ENCODE measurements at regions of chr1 and their contacts with region 1.

Region 1: GRCh38 chr1:221741711-221742554 is at the start of gene DUSP10:
- DNase-seq: peak; percentile 100
- ATAC-seq: peak; percentile 91
- H3K4me3 Mint-ChIP-seq: no peak within 1 kb of the TSS
- H3K27ac Mint-ChIP-seq: no peak within 1 kb of the TSS
- H3K4me1 Mint-ChIP-seq: peaks cover 27% of the 10 kb centered on the region
- H3K27me3 Mint-ChIP-seq: no peaks in the 10 kb centered on the region
- CTCF ChIP-seq: no peak
- total RNA-seq, gene DUSP10: 10.8 to 12.9 TPM

Region 2: DNA sequence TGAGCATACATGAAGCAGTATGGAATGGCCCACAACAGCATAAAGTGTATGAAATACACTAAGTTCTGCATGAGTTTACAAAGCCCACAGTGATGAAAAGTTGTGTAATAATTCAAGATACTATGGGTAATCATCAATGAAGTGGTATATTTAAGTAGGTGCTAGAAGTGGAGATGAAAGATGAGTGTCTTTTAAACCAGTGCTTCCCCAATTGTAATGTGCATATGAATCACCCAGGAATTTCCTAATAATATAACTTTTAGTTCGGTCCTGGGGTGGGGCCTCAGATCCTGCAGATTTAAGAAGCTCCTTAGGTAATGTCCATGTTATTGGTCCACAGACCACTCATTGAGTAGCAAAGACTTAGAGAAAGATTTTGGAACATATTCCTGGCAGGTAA is 184.9 kb before region 1 on chr1:
- CTCF ChIA-PET with region 1: no interaction called
- POLR2A ChIA-PET with region 1: no interaction called
- intact Hi-C with region 1: loop called (anchors 10 kb)
- DNase-seq: no peak
- ATAC-seq: no peak
- H3K4me3 Mint-ChIP-seq: no peak overlapping the region
- H3K27ac Mint-ChIP-seq: no peak overlapping the region
- H3K4me1 Mint-ChIP-seq: no peaks in the 10 kb centered on the region
- H3K27me3 Mint-ChIP-seq: peaks cover 2% of the 10 kb centered on the region
- CTCF ChIP-seq: no peak

Region 3: DNA sequence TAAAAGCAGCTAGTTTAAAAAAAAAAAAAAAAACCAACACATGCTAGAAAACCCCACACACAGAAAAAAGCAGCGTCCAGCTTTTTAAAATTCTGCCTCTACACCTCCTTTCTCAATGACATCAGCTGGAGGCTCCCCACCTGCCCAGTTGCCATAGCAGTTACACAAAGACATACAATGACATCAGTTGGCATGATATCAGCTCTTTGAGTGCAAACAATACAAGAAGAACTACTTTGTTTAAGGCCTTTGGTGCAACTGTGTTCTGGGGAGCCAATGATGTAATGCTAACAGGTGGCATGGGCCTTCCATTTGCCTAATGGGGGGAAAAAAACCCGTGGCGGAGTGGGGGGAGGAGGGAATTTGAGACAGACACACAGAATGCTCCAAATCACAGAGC is 32.9 kb before region 1 on chr1:
- CTCF ChIA-PET with region 1: interaction called, 5 read pairs
- POLR2A ChIA-PET with region 1: interaction called, 52 read pairs
- intact Hi-C with region 1: loop called (anchors 1 kb)
- DNase-seq: peak; percentile 61
- ATAC-seq: no peak
- H3K4me3 Mint-ChIP-seq: no peak overlapping the region
- H3K27ac Mint-ChIP-seq: peak overlapping the region; percentile 90
- H3K4me1 Mint-ChIP-seq: peaks cover 63% of the 10 kb centered on the region
- H3K27me3 Mint-ChIP-seq: no peaks in the 10 kb centered on the region
- CTCF ChIP-seq: no peak

Region 4: DNA sequence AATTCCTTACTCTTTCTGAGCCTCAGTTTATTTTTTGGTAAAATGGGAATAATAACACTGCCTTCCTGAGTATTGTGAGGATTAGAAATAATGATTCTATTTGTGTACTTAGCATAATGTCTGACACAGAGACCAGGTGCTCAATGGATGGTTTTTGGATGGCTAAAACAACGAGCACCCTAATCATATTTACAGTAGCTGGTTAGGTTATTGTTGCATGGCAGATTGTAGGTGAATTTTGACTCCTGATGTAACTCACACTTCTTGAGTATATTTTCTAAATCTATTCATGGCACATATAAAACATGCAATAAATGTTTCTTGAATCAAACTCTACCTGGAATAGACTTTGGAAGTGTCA is 11.9 kb after region 1 on chr1:
- CTCF ChIA-PET with region 1: interaction called, 4 read pairs
- POLR2A ChIA-PET with region 1: interaction called, 11 read pairs
- intact Hi-C with region 1: no loop called
- DNase-seq: no peak
- ATAC-seq: peak; percentile 43
- H3K4me3 Mint-ChIP-seq: no peak overlapping the region
- H3K27ac Mint-ChIP-seq: peak overlapping the region; percentile 88
- H3K4me1 Mint-ChIP-seq: peaks cover 52% of the 10 kb centered on the region
- H3K27me3 Mint-ChIP-seq: peaks cover 3% of the 10 kb centered on the region
- CTCF ChIP-seq: no peak

Region 5: GRCh38 chr1:221839796-221840395 is 98.0 kb after region 1 on chr1:
- CTCF ChIA-PET with region 1: interaction called, 7 read pairs
- POLR2A ChIA-PET with region 1: interaction called, 4 read pairs
- intact Hi-C with region 1: loop called (anchors 5 kb)
- DNase-seq: peak; percentile 90
- ATAC-seq: peak; percentile 96
- H3K4me3 Mint-ChIP-seq: no peak overlapping the region
- H3K27ac Mint-ChIP-seq: peak overlapping the region; percentile 80
- H3K4me1 Mint-ChIP-seq: peaks cover 36% of the 10 kb centered on the region
- H3K27me3 Mint-ChIP-seq: peaks cover 9% of the 10 kb centered on the region
- CTCF ChIP-seq: no peak

Measured in activated CD8-positive, alpha-beta T cell treated with anti-CD3 and anti-CD28 coated beads for 36 hours (primary cell).